Activated CD8-positive, alpha-beta memory T cell treated with anti-CD3 and anti-CD28 coated beads, Interleukin-2, amount 10 ng/mL, durations not matched to agents 7 days and 5 days (primary cell): ENCODE measurements at regions of chr12 and their contacts with region 1.

Region 1: DNA sequence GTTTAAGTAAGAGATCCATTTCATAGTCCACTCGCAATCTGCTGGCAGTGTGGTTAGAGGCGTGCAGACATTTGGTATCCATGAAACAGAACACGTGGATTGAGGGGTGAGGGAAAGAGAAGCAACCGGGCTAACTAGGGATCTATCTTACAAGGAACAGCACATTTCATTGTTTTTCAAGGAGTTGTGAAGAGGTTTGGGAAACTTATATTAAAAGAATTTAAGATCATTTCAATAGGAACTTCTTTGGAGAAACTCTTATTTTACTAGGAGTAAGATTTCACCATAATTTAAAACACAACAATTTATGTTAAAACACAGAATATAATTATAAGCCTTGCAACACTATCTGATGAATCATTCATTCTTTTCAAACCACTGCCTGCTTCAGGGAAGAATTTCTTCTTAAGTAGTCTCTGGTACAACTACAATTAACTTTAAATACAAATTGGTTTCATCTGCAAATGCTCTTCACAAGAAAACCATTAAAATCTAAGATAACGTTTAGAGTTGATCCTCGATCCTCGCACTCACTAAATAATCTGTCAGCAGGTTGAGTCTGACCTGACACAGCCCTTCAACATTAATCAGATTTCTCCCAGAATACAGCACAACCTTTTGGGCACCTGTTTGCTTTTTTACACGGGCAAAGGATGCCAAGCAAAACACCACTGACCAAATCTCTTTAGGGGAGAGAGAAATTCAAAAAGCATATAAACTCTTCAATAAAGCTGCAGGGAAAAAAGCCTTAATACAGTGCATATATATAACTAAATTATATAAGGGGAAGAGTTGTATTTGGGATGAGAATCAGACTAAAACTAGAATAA is 27.3 kb downstream of the PPTC7 start:
- DNase-seq: no peak
- ATAC-seq: no peak
- H3K4me3 Mint-ChIP-seq: no peak overlapping the region
- H3K27ac Mint-ChIP-seq: no peak overlapping the region
- H3K4me1 Mint-ChIP-seq: peaks cover 15% of the 10 kb centered on the region
- H3K27me3 Mint-ChIP-seq: no peaks in the 10 kb centered on the region

Region 2: GRCh38 chr12:110458756-110459155 is 97.0 kb before region 1 on chr12:
- CTCF ChIA-PET with region 1: no interaction called
- DNase-seq: no peak
- ATAC-seq: no peak
- H3K4me3 Mint-ChIP-seq: no peak overlapping the region
- H3K27ac Mint-ChIP-seq: no peak overlapping the region
- H3K4me1 Mint-ChIP-seq: peaks cover 6% of the 10 kb centered on the region
- H3K27me3 Mint-ChIP-seq: no peaks in the 10 kb centered on the region

Region 3: GRCh38 chr12:110543252-110543959 is 12.4 kb before region 1 on chr12:
- CTCF ChIA-PET with region 1: interaction called, 12 read pairs
- DNase-seq: no peak
- ATAC-seq: no peak
- H3K4me3 Mint-ChIP-seq: no peak overlapping the region
- H3K27ac Mint-ChIP-seq: peak overlapping the region; percentile 41
- H3K4me1 Mint-ChIP-seq: peaks cover 35% of the 10 kb centered on the region
- H3K27me3 Mint-ChIP-seq: no peaks in the 10 kb centered on the region